Aorta (tissue), 5 donors: ENCODE measurements at regions of chr12 and their contacts with region 1.

Region 1: DNA sequence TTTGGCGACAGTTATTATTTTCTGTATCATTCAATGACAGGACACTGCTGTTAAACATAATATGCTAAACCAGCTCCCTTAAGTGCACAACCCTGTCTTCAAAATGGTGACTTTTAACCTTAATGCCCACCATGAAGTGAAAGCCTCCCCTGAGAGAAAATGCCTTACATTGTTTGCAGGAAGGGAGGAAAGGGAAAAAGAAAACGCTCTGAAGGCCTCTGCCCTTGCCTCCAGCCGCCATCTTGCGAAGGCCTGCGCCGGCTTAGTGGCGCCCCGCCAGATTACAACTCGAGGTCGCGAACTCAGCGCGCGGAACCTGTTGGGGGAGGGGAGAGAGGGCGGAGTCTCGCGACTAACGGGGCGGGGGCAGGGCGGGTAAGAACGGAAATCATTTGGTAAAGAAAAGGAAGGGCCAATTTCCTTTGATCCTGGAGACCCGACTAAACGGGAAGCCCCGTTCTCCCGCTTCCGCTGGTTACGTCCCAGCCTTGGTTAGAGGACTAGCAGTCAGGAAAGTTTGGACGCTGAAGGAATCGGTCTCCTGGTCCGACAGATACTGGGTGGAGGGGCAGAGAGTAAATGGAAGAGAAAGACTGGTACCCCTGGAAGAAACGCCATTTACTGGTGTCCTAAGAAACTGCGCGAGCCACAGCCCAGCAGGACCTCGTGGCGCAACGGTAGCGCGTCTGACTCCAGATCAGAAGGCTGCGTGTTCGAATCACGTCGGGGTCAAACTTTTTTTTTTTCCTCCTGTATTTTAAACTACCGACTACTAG is 11.6 kb upstream of the TMPO start:
- DNase-seq: peak; percentile 97 to 98
- ATAC-seq: peak; percentile 98
- H3K4me3 ChIP-seq: peak overlapping the region; percentile 51 to 73
- H3K27ac ChIP-seq: peak overlapping the region; percentile 71 to 90
- H3K4me1 ChIP-seq: no peaks in the 10 kb centered on the region
- H3K27me3 ChIP-seq: no peaks in the 10 kb centered on the region

Region 2: GRCh38 chr12:98123021-98123797 is 380.6 kb before region 1 on chr12:
- intact Hi-C with region 1: no loop called
- DNase-seq: no peak
- ATAC-seq: no peak
- H3K4me3 ChIP-seq: no peak overlapping the region
- H3K27ac ChIP-seq: no peak overlapping the region
- H3K4me1 ChIP-seq: no peaks in the 10 kb centered on the region
- H3K27me3 ChIP-seq: no peaks in the 10 kb centered on the region

Region 3: DNA sequence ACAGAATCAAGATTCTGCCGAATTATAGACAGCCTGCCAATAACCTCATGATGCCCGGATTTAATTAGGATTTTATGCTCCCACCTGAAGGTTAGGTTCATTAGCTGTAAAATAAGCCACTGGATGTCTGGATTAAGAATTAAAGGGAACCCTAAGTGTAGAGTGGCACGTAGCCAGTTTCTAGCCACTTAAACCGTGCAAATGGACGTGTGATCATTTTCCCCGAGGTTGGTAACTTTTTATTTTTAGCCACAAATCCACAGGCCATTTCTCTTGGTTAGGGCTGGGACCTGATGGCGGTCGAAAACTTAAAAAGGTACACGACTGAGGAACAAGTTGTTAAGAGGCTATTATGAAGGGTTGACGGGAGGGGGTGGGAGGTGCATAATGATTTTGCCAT is 115.7 kb before region 1 on chr12:
- intact Hi-C with region 1: no loop called
- DNase-seq: no peak
- ATAC-seq: no peak
- H3K4me3 ChIP-seq: no peak overlapping the region
- H3K27ac ChIP-seq: no peak overlapping the region
- H3K4me1 ChIP-seq: no peaks in the 10 kb centered on the region
- H3K27me3 ChIP-seq: no peaks in the 10 kb centered on the region

Region 4: GRCh38 chr12:98418357-98419075 is 85.3 kb before region 1 on chr12:
- intact Hi-C with region 1: loop called (anchors 5 kb)
- DNase-seq: peak; percentile 96 to 97
- ATAC-seq: peak; percentile 90
- H3K4me3 ChIP-seq: no peak overlapping the region
- H3K27ac ChIP-seq: peak overlapping the region; percentile 91 to 94
- H3K4me1 ChIP-seq: no peaks in the 10 kb centered on the region
- H3K27me3 ChIP-seq: no peaks in the 10 kb centered on the region

Region 5: GRCh38 chr12:98424726-98425401 is 78.9 kb before region 1 on chr12:
- intact Hi-C with region 1: loop called in 1 of 2 experiments (anchors 5 kb)
- DNase-seq: peak; percentile 71 to 78
- ATAC-seq: no peak
- H3K4me3 ChIP-seq: no peak overlapping the region
- H3K27ac ChIP-seq: no peak overlapping the region
- H3K4me1 ChIP-seq: peaks cover 0 to 2% of the 10 kb centered on the region in 2 donors
- H3K27me3 ChIP-seq: no peaks in the 10 kb centered on the region

Region 6: DNA sequence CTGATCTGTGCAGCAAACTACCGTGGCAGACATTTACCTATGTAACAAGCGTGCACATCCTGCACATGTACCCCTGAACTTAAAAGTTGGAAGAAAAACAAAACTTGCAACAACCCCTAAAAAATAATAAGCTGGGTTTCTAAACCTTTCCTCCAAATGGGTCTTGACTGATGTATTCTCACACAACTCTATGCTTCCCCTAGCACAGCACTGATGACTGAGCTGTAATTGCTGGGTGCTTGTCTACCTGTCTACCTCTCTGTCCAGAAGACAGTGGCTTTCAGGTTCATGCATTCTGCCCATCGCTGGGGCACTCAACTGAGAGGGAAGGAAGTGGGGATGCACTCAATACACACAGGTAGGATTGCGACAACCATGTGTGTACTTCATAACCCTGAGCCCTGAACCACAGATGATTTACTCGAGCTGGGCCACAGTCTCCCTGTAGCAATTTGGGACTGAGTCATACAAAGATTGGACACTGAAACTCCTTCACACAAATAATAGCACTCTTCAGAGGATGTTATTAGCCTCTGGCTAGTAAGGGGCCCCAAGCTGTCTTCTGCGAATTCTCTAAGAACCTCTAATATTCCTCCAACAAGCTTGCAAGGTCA is 33.2 kb before region 1 on chr12:
- intact Hi-C with region 1: no loop called
- DNase-seq: no peak
- ATAC-seq: no peak
- H3K4me3 ChIP-seq: no peak overlapping the region
- H3K27ac ChIP-seq: no peak overlapping the region
- H3K4me1 ChIP-seq: peaks cover 0 to 2% of the 10 kb centered on the region in 2 donors
- H3K27me3 ChIP-seq: no peaks in the 10 kb centered on the region

Region 7: DNA sequence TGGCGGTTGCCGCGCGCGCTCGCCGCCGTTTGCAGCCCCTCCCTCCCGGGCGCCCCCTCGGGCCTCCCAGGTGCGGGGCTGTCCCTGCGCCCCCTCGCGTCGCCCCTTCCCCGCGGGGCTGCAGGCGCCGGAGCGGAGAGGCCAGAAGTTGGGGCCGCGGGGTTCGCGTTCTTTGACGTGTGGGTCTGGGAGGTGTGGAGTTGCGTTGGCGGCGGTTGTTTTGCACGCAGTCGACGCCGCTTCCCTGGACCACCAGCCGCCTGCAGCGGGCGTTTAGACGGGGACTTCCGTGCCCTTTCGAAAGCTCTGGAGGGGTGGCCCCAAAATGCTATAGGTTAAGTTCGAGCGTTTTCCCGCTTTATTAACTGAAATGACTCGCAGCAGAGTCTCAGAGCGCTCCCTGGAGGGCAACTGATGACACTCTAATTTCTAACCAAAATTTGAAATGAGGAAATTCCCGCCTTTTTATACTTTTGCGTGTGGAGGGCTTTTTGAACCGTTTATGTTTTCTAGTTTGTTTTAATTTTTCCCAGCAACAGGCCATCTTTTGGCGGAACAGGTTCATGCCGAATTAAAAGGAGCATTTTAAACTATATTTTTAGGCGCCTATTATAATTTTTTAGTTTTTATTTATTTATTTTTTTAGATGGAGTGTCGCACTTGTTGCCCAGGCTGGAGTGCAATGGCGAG is 12.5 kb after region 1 on chr12:
- intact Hi-C with region 1: loop called in 1 of 2 experiments (anchors 1 kb)
- DNase-seq: peak; percentile 82
- ATAC-seq: peak; percentile 79
- H3K4me3 ChIP-seq: peak overlapping the region; percentile 83 to 85
- H3K27ac ChIP-seq: peak overlapping the region in 1 of 2 donors; percentile 73
- H3K4me1 ChIP-seq: peaks cover 0 to 2% of the 10 kb centered on the region in 2 donors
- H3K27me3 ChIP-seq: no peaks in the 10 kb centered on the region